ENCODE measurements at regions of chr14 and their contacts with region 1.

Region 1: DNA sequence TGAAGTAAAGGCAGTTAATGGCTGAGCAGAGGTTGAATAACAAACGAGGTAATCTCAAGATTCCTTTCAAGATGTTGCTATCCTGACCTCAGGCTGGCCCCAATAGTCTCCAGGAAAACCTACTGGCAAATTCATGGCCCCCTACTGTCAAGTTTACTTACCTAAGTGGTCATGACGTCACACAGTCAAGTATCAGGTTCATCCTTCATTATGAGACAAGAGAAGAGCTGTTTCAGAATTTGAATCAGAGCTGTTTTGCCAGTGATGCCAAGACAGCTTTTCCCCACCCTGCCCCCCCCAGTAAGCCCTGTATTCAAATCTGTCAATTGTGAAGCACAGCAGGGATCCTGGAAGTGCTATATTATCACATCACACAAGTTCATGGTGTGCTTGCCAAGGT is 509.6 kb downstream of the NOVA1 start:
- DNase-seq: no peak
- H3K4me3 ChIP-seq: no peak overlapping the region
- H3K4me3 Mint-ChIP-seq: no peak overlapping the region
- H3K27ac ChIP-seq: no peak overlapping the region
- H3K27ac Mint-ChIP-seq: no peak overlapping the region
- H3K4me1 ChIP-seq: no peaks in the 10 kb centered on the region
- H3K4me1 Mint-ChIP-seq: no peaks in the 10 kb centered on the region
- H3K27me3 ChIP-seq: no peaks in the 10 kb centered on the region
- H3K27me3 Mint-ChIP-seq: no peaks in the 10 kb centered on the region
- CTCF ChIP-seq: no peak

Region 2: GRCh38 chr14:26163791-26164190 is 75.5 kb after region 1 on chr14:
- intact Hi-C with region 1: loop called in 1 of 2 experiments (anchors 2 kb)
- DNase-seq: no peak
- H3K4me3 ChIP-seq: no peak overlapping the region
- H3K4me3 Mint-ChIP-seq: no peak overlapping the region
- H3K27ac ChIP-seq: no peak overlapping the region
- H3K27ac Mint-ChIP-seq: no peak overlapping the region
- H3K4me1 ChIP-seq: no peaks in the 10 kb centered on the region
- H3K4me1 Mint-ChIP-seq: no peaks in the 10 kb centered on the region
- H3K27me3 ChIP-seq: no peaks in the 10 kb centered on the region
- H3K27me3 Mint-ChIP-seq: peaks cover 0 to 5% (median 0%) of the 10 kb centered on the region in 3 donors
- CTCF ChIP-seq: no peak

Region 3: GRCh38 chr14:26363689-26364088 is 275.4 kb after region 1 on chr14:
- intact Hi-C with region 1: no loop called
- DNase-seq: no peak
- H3K4me3 ChIP-seq: no peak overlapping the region
- H3K4me3 Mint-ChIP-seq: no peak overlapping the region
- H3K27ac ChIP-seq: no peak overlapping the region
- H3K27ac Mint-ChIP-seq: no peak overlapping the region
- H3K4me1 ChIP-seq: no peaks in the 10 kb centered on the region
- H3K4me1 Mint-ChIP-seq: no peaks in the 10 kb centered on the region
- H3K27me3 ChIP-seq: no peaks in the 10 kb centered on the region
- H3K27me3 Mint-ChIP-seq: no peaks in the 10 kb centered on the region
- CTCF ChIP-seq: no peak